ENCODE measurements at regions of chr9 and their contacts with region 1.

Region 1: DNA sequence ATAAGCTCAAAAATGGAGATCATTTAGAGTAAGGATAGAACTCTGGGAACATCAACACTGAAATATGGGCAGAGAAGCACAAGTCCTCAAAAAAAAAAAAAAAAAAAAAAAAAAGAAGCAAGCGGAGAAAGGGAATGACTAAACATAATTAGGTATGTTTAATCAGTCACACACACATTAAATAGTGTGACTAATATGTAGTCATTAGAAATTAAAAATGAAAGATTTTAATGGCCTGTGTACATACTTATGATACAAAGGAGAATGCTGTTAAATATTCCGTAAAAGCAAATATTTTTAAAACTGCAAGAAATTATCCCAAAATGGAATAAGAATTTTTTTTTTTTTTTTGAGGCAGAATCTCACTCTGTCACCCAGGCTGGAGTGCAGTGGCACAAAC is 10.5 kb downstream of the LPAR1 start:
- DNase-seq: no peak
- H3K4me3 ChIP-seq: no peak overlapping the region
- H3K27ac ChIP-seq: no peak overlapping the region
- H3K27me3 ChIP-seq: no peaks in the 10 kb centered on the region
- CTCF ChIP-seq: no peak

Region 2: GRCh38 chr9:111298731-111299598 is 271.2 kb after region 1 on chr9:
- CTCF ChIA-PET with region 1: no interaction called
- POLR2A ChIA-PET with region 1: interaction called, 13 read pairs
- DNase-seq: peak; percentile 54
- H3K4me3 ChIP-seq: no peak overlapping the region
- H3K27ac ChIP-seq: peak overlapping the region; percentile 25
- H3K27me3 ChIP-seq: no peaks in the 10 kb centered on the region
- CTCF ChIP-seq: peak; percentile 73